GM12878 (cell line): ENCODE measurements at regions of chr3 and their contacts with region 1.

Region 1: DNA sequence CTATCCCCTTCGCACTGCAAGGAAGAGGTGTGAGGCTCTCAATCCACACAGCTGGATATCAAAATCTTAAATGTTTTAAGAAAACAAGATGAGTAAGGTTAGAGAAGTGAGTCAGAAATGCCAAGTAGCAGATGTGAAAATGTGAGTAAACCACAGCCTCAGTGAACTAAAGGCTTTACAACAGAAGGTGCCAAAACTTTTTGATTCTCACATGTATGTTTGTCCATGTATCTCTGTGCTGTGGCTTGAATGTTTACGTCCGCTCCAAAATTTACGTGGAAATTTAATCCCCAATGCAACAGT is 126.8 kb upstream of the PFN2 start:
- DNase-seq: peak; percentile 32
- ATAC-seq: peak; percentile 80
- H3K4me3 ChIP-seq: no peak overlapping the region
- H3K27ac ChIP-seq: 0 out of 2 replicates have a peak overlapping the region, but pooled peaks have one; percentile 39
- H3K4me1 ChIP-seq: peaks cover 24% of the 10 kb centered on the region
- H3K27me3 ChIP-seq: no peaks in the 10 kb centered on the region
- CTCF ChIP-seq: no peak
- EP300 ChIP-seq: no peak; a peak in 1 of 4 replicates
- POLR2A ChIP-seq: no peak
- RAD21 ChIP-seq: no peak

Region 2: GRCh38 chr3:149352556-149352955 is 745.0 kb before region 1 on chr3:
- CTCF ChIA-PET with region 1: no interaction called
- POLR2A ChIA-PET with region 1: no interaction called
- RAD21 ChIA-PET with region 1: no interaction called
- SMC1A ChIA-PET with region 1: no interaction called
- in situ Hi-C with region 1: no loop called
- intact Hi-C with region 1: no loop called
- DNase-seq: no peak
- ATAC-seq: peak; percentile 99
- H3K4me3 ChIP-seq: no peak overlapping the region
- H3K27ac ChIP-seq: no peak overlapping the region
- H3K4me1 ChIP-seq: no peaks in the 10 kb centered on the region
- H3K27me3 ChIP-seq: peaks cover 5 to 6% of the 10 kb centered on the region in 2 experiments
- CTCF ChIP-seq: peak; percentile 68 to 81 (median 80)
- EP300 ChIP-seq: no peak
- POLR2A ChIP-seq: no peak
- RAD21 ChIP-seq: peak; percentile 76

Region 3: DNA sequence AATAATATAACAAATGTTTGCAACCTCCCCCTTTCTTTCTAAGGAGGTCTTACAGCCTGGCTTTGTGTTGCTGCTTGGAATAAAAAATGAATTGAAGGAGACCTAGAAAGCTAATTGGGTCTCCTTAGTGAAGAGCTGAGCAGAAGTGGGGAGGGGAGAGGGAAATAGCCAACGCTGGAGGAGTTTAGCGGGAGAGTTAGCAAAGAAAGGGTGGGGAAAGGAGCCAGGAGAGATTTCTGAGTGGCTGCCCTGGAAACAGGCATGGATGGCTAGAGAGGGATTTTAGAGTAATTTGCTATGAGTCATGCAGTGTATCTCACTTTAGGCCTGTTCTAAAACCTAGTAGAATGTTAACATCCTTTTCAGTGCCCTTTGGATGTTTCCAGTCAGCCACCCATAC is 81.6 kb before region 1 on chr3:
- CTCF ChIA-PET with region 1: no interaction called
- POLR2A ChIA-PET with region 1: no interaction called
- RAD21 ChIA-PET with region 1: interaction called, 3 read pairs
- SMC1A ChIA-PET with region 1: interaction called, 3 read pairs
- in situ Hi-C with region 1: no loop called
- intact Hi-C with region 1: loop called (anchors 5 kb)
- DNase-seq: no peak
- ATAC-seq: no peak
- H3K4me3 ChIP-seq: no peak overlapping the region
- H3K27ac ChIP-seq: no peak overlapping the region
- H3K4me1 ChIP-seq: no peaks in the 10 kb centered on the region
- H3K27me3 ChIP-seq: no peaks in the 10 kb centered on the region
- CTCF ChIP-seq: no peak
- EP300 ChIP-seq: no peak
- POLR2A ChIP-seq: no peak
- RAD21 ChIP-seq: no peak